Transverse colon (tissue), 4 donors: ENCODE measurements at regions of chr19 and their contacts with region 1.

Region 1: DNA sequence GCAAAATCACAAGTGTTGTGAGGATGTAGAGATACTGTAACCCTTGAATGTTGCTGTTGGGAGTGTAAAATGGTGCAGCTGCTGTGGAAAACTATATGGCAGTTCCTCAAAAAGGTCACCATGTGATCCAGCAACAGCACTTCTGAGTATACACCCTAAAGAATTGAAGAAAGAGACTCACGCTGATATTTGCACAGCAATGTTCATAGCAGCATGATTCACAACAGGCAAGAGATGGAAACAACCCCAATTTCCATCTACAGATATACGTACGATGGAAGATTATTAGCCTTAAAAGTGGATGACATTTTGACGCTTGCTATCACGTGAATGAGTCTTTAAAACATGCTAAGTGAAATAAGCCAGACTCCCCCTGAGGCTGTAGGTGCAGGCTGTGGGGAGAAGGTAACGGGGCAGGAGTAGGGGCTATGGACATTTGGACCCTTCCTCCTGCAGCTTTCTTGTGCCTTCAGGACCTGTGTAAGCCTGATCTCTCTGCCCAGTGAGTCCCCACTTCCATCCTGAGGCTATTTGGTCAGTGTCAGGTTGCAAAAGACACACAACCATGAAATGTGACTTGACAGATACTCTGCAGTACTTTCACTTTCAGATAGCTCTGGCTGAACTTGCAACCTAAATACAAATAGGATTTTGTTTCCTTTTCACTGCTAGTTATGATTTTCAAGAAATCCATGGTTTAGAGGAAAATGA is 17.6 kb upstream of the EID2 start:
- DNase-seq: no peak
- H3K4me3 ChIP-seq: no peak overlapping the region
- H3K27ac ChIP-seq: no peak overlapping the region
- H3K4me1 ChIP-seq: peaks cover 0 to 9% (median 0%) of the 10 kb centered on the region in 4 donors
- H3K27me3 ChIP-seq: no peaks in the 10 kb centered on the region
- CTCF ChIP-seq: no peak
- EP300 ChIP-seq: no peak
- POLR2A ChIP-seq: no peak

Region 2: DNA sequence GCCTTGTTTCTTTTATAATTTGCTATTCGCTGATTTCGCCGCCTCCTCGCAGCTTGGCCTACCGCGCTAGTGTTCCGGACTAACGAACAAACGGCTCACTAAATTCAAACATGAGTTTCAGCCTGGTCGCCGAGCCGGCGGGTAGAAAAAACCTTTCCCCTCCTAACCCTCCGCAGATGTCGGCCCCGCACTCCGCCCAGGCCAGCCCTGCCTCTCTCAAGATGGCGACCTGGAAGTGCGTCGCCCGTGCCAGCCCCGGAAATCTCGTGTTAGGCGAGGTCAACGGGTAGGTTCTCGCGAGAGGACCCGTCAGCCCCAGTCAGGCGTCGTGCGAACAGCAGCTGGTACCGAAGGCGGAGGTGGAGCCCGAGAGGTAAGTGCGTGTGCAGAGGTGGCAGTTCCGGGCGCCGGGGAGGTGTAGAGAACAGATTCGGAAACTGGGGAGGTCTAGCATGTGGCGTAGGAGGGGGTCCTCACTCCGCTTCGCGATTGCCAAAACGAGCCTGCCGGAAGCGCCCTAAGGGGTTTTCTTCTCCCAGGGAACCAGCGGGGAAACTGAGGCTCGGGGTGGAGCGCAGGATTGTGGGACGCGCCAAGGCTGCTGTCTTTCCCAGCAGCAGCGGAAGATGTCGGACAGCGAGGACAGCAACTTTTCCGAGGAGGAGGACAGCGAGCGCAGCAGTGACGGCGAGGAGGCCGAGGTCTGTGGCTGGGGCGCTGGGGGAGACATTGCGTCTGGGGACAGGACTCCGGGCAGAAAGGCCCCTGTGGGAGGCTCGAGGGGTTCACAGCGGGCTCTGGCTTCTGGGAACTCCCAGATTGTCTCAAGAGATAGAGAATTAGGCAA is 112.1 kb before region 1 on chr19 and contains the start of gene SUPT5H:
- in situ Hi-C with region 1: no loop called
- intact Hi-C with region 1: no loop called
- DNase-seq: peak; percentile 98
- H3K4me3 ChIP-seq: peak within 1 kb of the TSS; percentile 61 to 95 (median 94)
- H3K27ac ChIP-seq: peak within 1 kb of the TSS; percentile 88 to 98 (median 96)
- H3K4me1 ChIP-seq: peaks cover 13 to 42% (median 27%) of the 10 kb centered on the region in 4 donors
- H3K27me3 ChIP-seq: no peaks in the 10 kb centered on the region
- CTCF ChIP-seq: no peak
- EP300 ChIP-seq: no peak
- POLR2A ChIP-seq: peak; percentile 96
- total RNA-seq, gene SUPT5H: 97.1 to 161 (median 125) TPM

Region 3: DNA sequence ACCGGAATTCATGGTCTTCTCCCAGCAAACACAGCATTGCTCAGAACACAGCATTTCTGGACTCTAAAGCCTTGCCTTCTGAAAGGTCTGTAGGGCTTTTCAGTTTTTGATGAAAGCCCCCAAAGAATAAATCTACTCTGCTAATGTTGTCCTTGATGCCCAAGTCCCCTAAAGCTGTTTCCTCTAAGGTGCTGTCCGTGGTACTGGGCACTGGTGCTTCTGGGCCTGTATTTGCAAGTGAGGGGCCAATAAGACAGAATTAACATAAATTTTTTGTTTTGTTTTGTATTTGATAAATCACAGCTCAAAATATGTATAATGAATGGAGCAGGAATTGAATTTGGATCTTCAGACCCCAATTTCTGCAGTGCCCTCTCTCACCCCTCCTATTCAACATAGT is 32.7 kb after region 1 on chr19:
- in situ Hi-C with region 1: no loop called
- intact Hi-C with region 1: no loop called
- DNase-seq: no peak
- H3K4me3 ChIP-seq: no peak overlapping the region
- H3K27ac ChIP-seq: no peak overlapping the region
- H3K4me1 ChIP-seq: no peaks in the 10 kb centered on the region
- H3K27me3 ChIP-seq: peaks cover 18% of the 10 kb centered on the region
- CTCF ChIP-seq: no peak
- EP300 ChIP-seq: no peak
- POLR2A ChIP-seq: no peak

Region 4: DNA sequence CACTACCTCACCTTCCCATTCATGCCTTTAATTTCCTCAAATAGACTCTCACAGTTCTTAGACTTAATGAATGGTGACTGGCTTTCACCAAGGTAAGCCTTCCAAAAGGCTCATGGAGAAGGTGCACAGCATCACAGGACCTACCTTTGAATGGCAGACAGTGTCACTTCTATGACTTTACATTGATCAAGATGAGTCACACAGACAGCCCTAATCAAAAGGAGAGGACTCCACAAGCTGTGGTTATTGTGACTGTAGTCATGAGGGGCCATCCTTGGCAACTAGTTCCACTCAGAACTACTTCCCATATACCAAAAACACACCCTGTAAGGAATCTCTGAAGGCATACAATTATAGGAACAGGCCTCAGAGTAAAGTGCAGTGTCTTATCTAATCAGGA is 104.0 kb after region 1 on chr19:
- in situ Hi-C with region 1: loop called in 2 of 4 experiments (anchors 10 kb)
- intact Hi-C with region 1: no loop called
- DNase-seq: no peak
- H3K4me3 ChIP-seq: no peak overlapping the region
- H3K27ac ChIP-seq: no peak overlapping the region
- H3K4me1 ChIP-seq: no peaks in the 10 kb centered on the region
- H3K27me3 ChIP-seq: peaks cover 15% of the 10 kb centered on the region
- CTCF ChIP-seq: no peak
- EP300 ChIP-seq: no peak
- POLR2A ChIP-seq: no peak

Region 5: DNA sequence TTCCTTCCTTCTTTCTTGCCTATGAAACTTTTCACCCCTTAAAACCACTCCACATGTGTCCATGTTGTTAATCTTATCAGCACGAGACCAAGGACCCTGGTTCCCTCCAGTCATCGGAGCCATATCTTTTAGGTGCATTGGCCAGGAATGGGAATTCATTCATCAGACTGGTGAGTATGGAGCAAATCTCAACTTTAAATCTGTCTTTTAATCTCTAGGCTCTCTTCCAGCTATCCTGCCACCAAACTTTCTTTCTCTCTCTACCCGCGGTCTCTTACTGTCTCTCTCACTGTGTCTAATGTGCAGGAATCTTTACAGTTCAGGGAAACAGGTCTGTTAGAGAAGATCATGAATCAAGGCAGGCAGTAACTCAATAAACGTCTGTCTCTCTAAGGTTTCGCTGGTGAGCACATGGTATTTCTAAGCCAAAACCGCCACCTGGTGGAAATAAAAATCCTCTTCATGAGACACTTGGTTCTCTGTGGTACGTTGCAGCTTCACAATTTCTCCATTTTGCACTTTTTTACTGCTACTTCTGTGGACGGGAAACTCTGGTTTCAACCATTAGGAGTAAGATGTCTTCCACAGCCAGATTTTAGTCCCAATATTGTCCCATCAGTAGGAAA is 114.3 kb after region 1 on chr19:
- in situ Hi-C with region 1: loop called (anchors 10 kb)
- intact Hi-C with region 1: loop called (anchors 5 kb)
- DNase-seq: no peak
- H3K4me3 ChIP-seq: no peak overlapping the region
- H3K27ac ChIP-seq: no peak overlapping the region
- H3K4me1 ChIP-seq: no peaks in the 10 kb centered on the region
- H3K27me3 ChIP-seq: peaks cover 14% of the 10 kb centered on the region
- CTCF ChIP-seq: peak; percentile 24 to 54 (median 49)
- EP300 ChIP-seq: no peak
- POLR2A ChIP-seq: no peak

Region 6: GRCh38 chr19:40403262-40403984 is 845.8 kb after region 1 on chr19:
- in situ Hi-C with region 1: no loop called
- intact Hi-C with region 1: no loop called
- DNase-seq: peak; percentile 95
- H3K4me3 ChIP-seq: peak overlapping the region; percentile 29 to 57 (median 50)
- H3K27ac ChIP-seq: peak overlapping the region; percentile 85 to 92 (median 88)
- H3K4me1 ChIP-seq: peaks cover 0 to 10% (median 7%) of the 10 kb centered on the region in 4 donors
- H3K27me3 ChIP-seq: no peaks in the 10 kb centered on the region
- CTCF ChIP-seq: peak in 2 of 5 experiments; percentile 8 to 20
- EP300 ChIP-seq: no peak
- POLR2A ChIP-seq: peak; percentile 48